ENCODE measurements at regions of chr15 and their contacts with region 1.

Region 1: DNA sequence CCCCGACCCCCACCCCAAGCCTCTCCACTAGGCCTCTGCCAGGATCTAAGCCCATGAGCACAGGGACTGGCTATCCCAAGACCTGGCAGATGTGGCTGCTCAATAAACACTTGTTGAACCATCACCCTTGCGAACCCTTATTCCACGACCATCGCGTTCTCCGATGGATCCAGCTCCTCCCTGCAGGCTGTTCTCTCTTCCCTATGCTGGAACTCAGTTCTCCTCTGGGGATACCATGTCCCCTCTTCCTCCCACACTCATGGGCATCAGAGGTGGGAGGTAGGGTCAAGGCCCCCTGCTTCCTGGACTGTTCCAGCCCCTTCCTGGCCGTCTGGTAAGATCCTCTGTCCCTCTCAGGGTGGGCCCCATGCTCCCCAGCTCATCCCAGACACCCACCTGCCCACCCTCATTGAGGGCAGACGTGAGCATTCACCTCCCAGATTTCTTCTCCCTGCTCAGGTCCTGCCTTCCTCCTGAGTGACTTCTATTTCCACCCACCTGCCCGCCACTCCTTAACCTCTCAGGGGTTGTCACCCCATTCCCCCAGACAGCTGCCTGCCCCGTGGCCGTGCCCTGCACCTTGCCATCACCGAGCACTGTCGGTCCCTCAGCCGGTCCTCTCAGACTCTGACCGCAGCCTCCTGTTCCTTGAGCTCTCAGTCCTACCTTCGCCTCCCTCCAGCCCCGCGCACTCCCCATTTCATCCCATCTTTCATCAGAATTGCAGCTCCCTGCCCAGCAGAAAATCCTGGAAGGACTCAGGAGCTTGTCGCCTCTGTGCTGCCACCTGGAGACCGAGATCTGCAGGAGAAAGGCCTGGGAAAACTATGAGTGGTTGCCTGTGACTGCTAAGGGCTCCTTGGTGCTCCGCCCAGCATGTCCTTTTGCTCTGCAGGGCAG is 42.0 kb downstream of the PML start:
- DNase-seq: peak; percentile 30
- ATAC-seq: no peak
- H3K4me3 Mint-ChIP-seq: no peak overlapping the region
- H3K27ac Mint-ChIP-seq: no peak overlapping the region
- H3K4me1 Mint-ChIP-seq: no peaks in the 10 kb centered on the region
- H3K27me3 Mint-ChIP-seq: no peaks in the 10 kb centered on the region

Region 2: DNA sequence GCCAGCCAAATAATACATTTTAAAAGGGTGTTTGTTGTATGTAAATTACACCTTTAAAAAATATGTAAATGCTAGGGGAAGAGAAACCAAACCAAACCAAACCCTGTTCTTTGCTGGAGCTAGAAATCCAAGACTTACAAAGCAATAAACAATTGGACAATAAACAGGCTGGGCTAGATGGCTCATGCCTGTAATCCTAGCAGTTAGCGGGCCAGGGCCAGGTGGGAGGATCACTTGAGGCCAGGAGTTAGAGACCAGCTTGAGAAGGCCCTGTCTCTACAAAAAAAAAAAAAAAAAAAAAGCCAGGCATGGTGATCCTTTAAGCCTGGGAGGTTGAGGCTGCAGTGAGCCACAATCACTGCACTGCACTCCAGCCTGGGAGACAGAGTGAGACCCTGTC is 56.9 kb before region 1 on chr15:
- CTCF ChIA-PET with region 1: interaction called, 15 read pairs
- POLR2A ChIA-PET with region 1: no interaction called
- intact Hi-C with region 1: loop called in 1 of 2 experiments (anchors 5 kb)
- DNase-seq: no peak
- ATAC-seq: no peak
- H3K4me3 Mint-ChIP-seq: no peak overlapping the region
- H3K27ac Mint-ChIP-seq: no peak overlapping the region
- H3K4me1 Mint-ChIP-seq: peaks cover 41% of the 10 kb centered on the region
- H3K27me3 Mint-ChIP-seq: peaks cover 8% of the 10 kb centered on the region